GM12878 (cell line): ENCODE measurements at regions of chr10 and their contacts with region 1.

Region 1: DNA sequence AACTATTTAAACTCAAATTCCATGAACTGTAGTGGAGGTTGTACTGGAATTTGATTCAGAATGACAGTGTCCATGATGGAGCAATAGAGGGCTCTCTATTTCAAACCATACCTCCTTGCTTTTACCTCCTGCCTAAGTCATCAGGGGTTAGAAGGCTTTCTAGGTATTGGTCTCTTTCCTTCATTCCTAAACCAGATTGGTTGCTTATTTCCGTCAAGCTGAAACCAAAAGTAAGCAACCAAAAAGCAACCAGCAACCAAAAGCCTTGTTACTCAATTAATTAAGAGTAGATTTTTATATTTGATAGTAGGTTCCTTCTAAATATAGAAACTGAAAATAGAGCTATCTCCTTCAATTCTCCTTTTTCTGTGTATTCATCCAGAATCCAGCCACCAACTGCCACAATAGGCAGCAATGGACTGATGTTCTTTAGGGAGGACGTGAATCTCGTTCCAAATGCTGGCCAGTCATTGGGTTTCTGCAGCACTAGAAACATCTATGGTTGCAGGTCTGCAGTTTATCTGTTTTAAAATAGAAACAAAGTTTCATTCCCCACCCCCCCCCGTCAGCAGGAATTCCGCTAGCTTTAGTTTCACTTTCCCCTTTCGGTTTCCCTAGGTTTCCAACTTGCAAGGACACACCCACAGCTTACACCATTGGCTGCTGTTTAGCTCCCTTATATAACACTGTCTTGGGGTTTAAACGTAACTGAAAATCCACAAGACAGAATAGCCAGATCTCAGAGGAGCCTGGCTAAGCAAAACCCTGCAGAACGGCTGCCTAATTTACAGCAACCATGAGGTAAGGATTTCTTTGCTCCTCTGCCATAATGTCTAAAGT is at the start of gene IFIT1:
- DNase-seq: peak; percentile 80
- ATAC-seq: peak; percentile 94
- H3K4me3 ChIP-seq: peak within 1 kb of the TSS; percentile 67
- H3K27ac ChIP-seq: peak within 1 kb of the TSS; percentile 71
- H3K4me1 ChIP-seq: no peaks in the 10 kb centered on the region; the same call in 1 of the 2 replicates
- H3K27me3 ChIP-seq: no peaks in the 10 kb centered on the region
- CTCF ChIP-seq: no peak
- EP300 ChIP-seq: no peak
- POLR2A ChIP-seq: peak; percentile 63
- RAD21 ChIP-seq: no peak
- polyA plus RNA-seq, gene IFIT1: 28.9 to 37.2 TPM

Region 2: DNA sequence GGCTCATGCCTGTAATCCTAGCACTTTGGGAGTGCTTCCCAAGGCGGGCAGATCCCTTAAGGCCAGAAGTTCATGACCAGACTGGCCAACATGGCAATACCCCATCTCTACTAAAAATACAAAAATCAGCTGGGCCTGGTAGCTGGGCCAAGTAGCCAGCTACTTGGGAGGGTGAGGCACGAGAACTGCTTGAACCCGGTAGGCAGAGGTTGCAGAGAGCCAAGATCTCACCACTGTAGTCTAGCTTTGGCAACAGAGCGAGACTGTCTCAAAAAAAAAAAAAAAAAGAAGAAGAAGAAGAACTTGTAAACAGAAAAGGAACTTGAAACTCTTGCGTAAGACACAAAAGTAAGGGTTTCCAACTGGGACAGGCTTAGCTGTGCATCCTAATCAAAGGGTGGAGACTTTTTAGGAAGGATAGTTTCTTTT is 95.9 kb before region 1 on chr10:
- CTCF ChIA-PET with region 1: interaction called, 4 read pairs
- POLR2A ChIA-PET with region 1: no interaction called
- RAD21 ChIA-PET with region 1: interaction called, 10 read pairs
- SMC1A ChIA-PET with region 1: interaction called, 4 read pairs
- in situ Hi-C with region 1: no loop called
- intact Hi-C with region 1: no loop called
- DNase-seq: no peak
- ATAC-seq: peak; percentile 75
- H3K4me3 ChIP-seq: peak overlapping the region; percentile 18; the same call in 1 of the 2 replicates
- H3K27ac ChIP-seq: no peak overlapping the region
- H3K4me1 ChIP-seq: peaks cover 15% of the 10 kb centered on the region; the same call in 1 of the 2 replicates
- H3K27me3 ChIP-seq: no peaks in the 10 kb centered on the region
- CTCF ChIP-seq: no peak
- EP300 ChIP-seq: no peak
- POLR2A ChIP-seq: no peak
- RAD21 ChIP-seq: no peak

Region 3: DNA sequence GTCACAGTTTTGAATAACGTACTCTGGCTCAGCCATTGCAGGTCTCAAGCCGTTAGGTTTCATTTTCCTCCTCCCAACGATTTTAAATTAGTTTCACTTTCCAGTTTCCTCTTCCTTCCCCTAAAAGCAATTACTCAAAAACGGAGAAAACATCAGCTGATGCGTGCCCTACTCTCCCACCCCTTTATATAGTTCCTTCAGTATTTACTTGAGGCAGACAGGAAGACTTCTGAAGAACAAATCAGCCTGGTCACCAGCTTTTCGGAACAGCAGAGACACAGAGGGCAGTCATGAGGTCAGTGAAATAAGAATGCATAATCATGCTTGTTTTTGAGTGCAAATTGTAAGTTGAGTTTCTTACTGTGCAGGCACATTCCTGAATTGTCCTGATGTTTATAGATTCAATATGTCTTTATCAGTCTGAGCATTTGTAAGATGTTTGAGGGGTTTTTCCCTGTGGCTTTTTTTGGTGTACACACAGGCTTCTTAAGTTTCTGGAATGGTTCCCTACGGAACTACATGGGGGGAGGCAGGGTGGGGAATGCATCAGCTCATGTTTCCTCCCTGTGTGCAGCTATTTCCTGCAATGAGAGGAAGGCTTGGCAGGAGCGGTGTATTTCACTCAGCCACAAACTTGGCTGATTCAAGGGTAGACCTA is 64.2 kb before region 1 on chr10 and contains the start of gene IFIT3:
- CTCF ChIA-PET with region 1: interaction called, 13 read pairs
- POLR2A ChIA-PET with region 1: no interaction called
- RAD21 ChIA-PET with region 1: interaction called, 3 read pairs
- SMC1A ChIA-PET with region 1: interaction called, 6 read pairs
- in situ Hi-C with region 1: no loop called
- intact Hi-C with region 1: no loop called
- DNase-seq: peak; percentile 62
- ATAC-seq: peak; percentile 33
- H3K4me3 ChIP-seq: peak within 1 kb of the TSS; percentile 51
- H3K27ac ChIP-seq: peak within 1 kb of the TSS; percentile 60
- H3K4me1 ChIP-seq: peaks cover 22% of the 10 kb centered on the region
- H3K27me3 ChIP-seq: no peaks in the 10 kb centered on the region
- CTCF ChIP-seq: no peak
- EP300 ChIP-seq: no peak
- POLR2A ChIP-seq: peak; percentile 63
- RAD21 ChIP-seq: no peak
- polyA plus RNA-seq, gene IFIT3: 27.0 to 50.4 TPM

Region 4: DNA sequence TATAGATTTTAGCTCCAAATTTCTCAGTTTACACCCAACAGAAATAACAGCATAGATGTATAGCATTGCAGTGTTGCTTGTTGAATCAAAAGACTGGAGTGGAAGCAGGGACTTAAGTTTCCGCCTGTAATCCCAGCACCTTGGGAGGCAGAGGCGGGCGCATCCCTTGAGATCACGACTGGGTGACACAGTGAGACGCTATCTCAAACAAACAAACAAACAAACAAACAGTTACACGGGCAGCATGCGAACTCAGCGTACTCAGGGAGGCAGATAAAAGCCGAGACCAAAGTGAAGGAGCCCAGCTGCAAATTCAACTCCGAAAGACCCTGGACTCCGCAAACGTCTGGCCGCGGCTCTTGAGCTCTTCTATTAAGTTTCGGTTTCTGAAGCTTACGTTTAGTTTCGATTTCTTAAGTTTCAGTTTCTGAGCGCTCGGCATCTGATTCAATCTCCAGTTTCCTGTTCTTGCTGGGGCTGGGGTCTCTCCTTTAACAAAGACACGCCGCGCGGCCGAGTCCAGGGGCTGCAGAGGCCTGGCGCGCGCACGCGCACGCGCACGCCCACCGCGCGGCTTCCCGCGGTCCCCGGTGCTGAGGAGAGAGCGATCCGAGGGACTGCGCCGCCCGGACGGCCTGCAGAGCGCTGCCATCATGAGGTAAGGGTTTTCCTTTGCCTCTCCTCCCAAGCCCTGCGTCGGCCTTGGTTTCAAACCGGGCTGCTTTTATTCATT is 22.2 kb after region 1 on chr10 and contains the start of gene IFIT5:
- CTCF ChIA-PET with region 1: interaction called, 30 read pairs
- POLR2A ChIA-PET with region 1: interaction called, 18 read pairs
- RAD21 ChIA-PET with region 1: interaction called, 20 read pairs
- SMC1A ChIA-PET with region 1: interaction called, 27 read pairs
- in situ Hi-C with region 1: no loop called
- intact Hi-C with region 1: loop called (anchors 1 kb)
- DNase-seq: peak; percentile 58
- ATAC-seq: peak; percentile 84
- H3K4me3 ChIP-seq: peak within 1 kb of the TSS; percentile 79
- H3K27ac ChIP-seq: peak within 1 kb of the TSS; percentile 97
- H3K4me1 ChIP-seq: no peaks in the 10 kb centered on the region
- H3K27me3 ChIP-seq: no peaks in the 10 kb centered on the region
- CTCF ChIP-seq: no peak
- EP300 ChIP-seq: no peak
- POLR2A ChIP-seq: peak; percentile 57
- RAD21 ChIP-seq: no peak
- polyA plus RNA-seq, gene IFIT5: 5.9 to 8.3 TPM

Region 5: DNA sequence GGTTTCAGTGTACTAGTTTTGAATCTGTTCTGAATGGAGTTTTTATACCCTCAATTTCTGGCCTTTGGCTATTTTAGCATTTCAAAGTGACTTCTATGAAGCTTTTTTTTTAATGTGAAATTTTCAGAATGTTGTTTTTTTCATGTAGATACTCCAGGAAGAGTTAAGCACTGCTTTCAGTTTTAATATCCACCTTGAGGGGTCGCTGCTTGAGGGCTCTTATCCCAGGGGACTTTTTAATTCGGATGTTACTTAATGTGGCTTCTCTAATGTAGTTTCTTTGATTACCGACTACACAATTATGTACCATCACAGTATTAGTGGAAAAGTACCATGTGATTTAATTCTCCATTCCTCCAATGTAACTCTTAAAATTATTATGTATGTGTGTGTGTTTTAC is 27.4 kb after region 1 on chr10:
- CTCF ChIA-PET with region 1: interaction called, 30 read pairs
- POLR2A ChIA-PET with region 1: interaction called, 18 read pairs
- RAD21 ChIA-PET with region 1: interaction called, 20 read pairs
- SMC1A ChIA-PET with region 1: interaction called, 27 read pairs
- in situ Hi-C with region 1: no loop called
- intact Hi-C with region 1: loop called (anchors 1 kb)
- DNase-seq: no peak
- ATAC-seq: no peak
- H3K4me3 ChIP-seq: peak overlapping the region; percentile 61
- H3K27ac ChIP-seq: no peak overlapping the region
- H3K4me1 ChIP-seq: no peaks in the 10 kb centered on the region
- H3K27me3 ChIP-seq: no peaks in the 10 kb centered on the region
- CTCF ChIP-seq: peak; percentile 47 to 57 (median 49)
- EP300 ChIP-seq: no peak
- POLR2A ChIP-seq: no peak
- RAD21 ChIP-seq: peak; percentile 27; the same call in 1 of the 2 replicates

Region 6: GRCh38 chr10:89490596-89491335 is 98.6 kb after region 1 on chr10:
- CTCF ChIA-PET with region 1: no interaction called
- POLR2A ChIA-PET with region 1: no interaction called
- RAD21 ChIA-PET with region 1: no interaction called
- SMC1A ChIA-PET with region 1: no interaction called
- in situ Hi-C with region 1: no loop called
- intact Hi-C with region 1: no loop called
- DNase-seq: no peak
- ATAC-seq: no peak
- H3K4me3 ChIP-seq: no peak overlapping the region
- H3K27ac ChIP-seq: no peak overlapping the region
- H3K4me1 ChIP-seq: no peaks in the 10 kb centered on the region
- H3K27me3 ChIP-seq: peaks cover 0 to 7% of the 10 kb centered on the region in 2 experiments; a peak in 2 of 4 replicates
- CTCF ChIP-seq: no peak
- EP300 ChIP-seq: no peak
- POLR2A ChIP-seq: no peak
- RAD21 ChIP-seq: no peak

Region 7: GRCh38 chr10:89553064-89553734 is 161.1 kb after region 1 on chr10:
- CTCF ChIA-PET with region 1: no interaction called
- POLR2A ChIA-PET with region 1: no interaction called
- RAD21 ChIA-PET with region 1: no interaction called
- SMC1A ChIA-PET with region 1: no interaction called
- in situ Hi-C with region 1: no loop called
- intact Hi-C with region 1: no loop called
- DNase-seq: no peak
- ATAC-seq: no peak
- H3K4me3 ChIP-seq: no peak overlapping the region
- H3K27ac ChIP-seq: no peak overlapping the region
- H3K4me1 ChIP-seq: no peaks in the 10 kb centered on the region
- H3K27me3 ChIP-seq: no peaks in the 10 kb centered on the region
- CTCF ChIP-seq: no peak
- EP300 ChIP-seq: no peak
- POLR2A ChIP-seq: no peak
- RAD21 ChIP-seq: no peak

Region 8: DNA sequence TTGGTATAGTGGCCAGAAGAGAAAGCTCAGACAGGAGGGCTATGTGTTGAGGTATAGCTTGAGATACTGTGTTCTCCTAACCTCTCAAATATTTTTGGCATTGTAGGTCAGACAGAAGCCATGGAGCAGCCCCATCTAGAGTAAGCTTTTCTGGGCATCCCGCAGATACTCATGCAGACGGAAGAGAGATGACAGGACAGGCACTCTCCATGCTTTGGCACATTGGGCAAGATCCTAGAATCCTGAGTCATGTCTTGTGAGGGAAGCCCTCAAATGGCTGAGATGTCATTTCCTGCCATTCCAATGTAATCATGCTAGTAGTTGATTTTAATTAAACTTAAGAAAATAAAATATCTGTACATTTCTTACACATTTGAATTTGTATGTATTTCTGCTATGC is 292.5 kb after region 1 on chr10:
- CTCF ChIA-PET with region 1: no interaction called
- POLR2A ChIA-PET with region 1: no interaction called
- RAD21 ChIA-PET with region 1: no interaction called
- SMC1A ChIA-PET with region 1: no interaction called
- in situ Hi-C with region 1: no loop called
- intact Hi-C with region 1: no loop called
- DNase-seq: no peak
- ATAC-seq: no peak
- H3K4me3 ChIP-seq: no peak overlapping the region
- H3K27ac ChIP-seq: no peak overlapping the region
- H3K4me1 ChIP-seq: no peaks in the 10 kb centered on the region
- H3K27me3 ChIP-seq: no peaks in the 10 kb centered on the region
- CTCF ChIP-seq: no peak
- EP300 ChIP-seq: no peak
- POLR2A ChIP-seq: no peak
- RAD21 ChIP-seq: no peak